ENCODE measurements at regions of chr14 and their contacts with region 1.

Region 1: DNA sequence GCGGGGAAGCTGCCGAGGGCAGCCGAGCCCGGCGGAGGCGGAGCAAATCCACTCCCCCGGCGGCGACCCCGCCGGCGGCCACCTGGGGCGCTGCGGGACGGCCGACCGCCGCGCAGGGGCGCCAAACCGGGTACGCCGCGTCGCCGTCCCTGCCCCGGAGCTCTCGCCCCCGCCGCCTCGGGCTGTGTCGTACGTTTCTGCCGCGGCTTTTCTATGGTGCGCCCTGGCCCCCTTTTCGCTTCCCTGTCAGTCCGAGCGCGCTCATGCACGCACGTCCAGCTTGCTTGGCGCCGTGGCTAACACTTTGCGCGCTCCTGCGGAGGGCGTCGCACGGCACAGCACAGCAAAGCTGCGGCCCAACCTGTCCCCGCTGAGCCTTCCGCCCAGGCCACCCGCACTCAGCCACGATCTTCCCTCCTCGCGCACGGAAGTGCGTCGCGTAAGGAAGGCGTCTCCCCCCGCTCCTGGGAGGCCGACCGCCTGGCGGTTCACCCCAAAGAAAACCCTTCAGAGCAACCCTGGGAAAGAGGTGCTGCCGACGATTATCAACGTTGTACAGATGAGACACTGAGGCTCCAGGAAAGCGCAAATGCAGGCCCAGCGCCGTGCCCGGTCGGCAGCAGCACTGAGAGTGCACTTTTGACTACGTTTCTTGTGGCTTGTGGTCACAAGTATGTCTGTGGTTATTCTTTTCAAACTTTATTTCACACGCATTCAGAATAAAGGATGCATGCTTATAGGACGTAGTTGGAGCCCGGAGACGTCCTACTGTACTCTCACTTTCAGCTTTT is at the start of gene HECTD1:
- DNase-seq: peak; percentile 15 to 93
- H3K4me3 ChIP-seq: peak within 1 kb of the TSS; percentile 82 to 98
- H3K27ac ChIP-seq: peak within 1 kb of the TSS; percentile 98 to 100
- H3K4me1 ChIP-seq: peaks cover 7 to 22% of the 10 kb centered on the region in 2 donors
- H3K27me3 ChIP-seq: no peaks in the 10 kb centered on the region
- CTCF ChIP-seq: peak; percentile 22 to 89 (median 37)
- total RNA-seq, gene HECTD1: 63.6 TPM

Region 2: GRCh38 chr14:31166271-31166710 is 41.7 kb before region 1 on chr14:
- intact Hi-C with region 1: loop called (anchors 2 kb)
- DNase-seq: no peak
- H3K4me3 ChIP-seq: no peak overlapping the region
- H3K27ac ChIP-seq: peak overlapping the region; percentile 80 to 92
- H3K4me1 ChIP-seq: peaks cover 7 to 21% of the 10 kb centered on the region in 2 donors
- H3K27me3 ChIP-seq: no peaks in the 10 kb centered on the region
- CTCF ChIP-seq: no peak

Region 3: DNA sequence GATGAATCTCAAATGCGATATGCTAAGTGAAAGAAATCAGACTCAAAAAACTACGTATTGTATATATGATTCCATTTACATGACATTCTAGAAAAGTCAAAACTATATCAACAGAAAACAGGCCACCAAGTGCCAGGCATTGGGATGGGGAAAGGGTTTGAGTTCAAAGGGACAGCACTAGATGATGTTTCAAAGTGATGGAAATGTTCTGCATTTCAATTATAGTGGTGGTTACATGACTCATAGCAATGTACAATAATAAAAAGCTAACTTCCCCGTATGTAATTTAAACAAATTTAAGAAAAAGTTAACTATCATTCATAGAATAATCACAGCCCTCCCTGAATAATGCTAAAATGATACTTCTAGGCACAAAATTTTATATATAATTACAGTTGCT is 13.9 kb before region 1 on chr14:
- intact Hi-C with region 1: no loop called
- DNase-seq: no peak
- H3K4me3 ChIP-seq: no peak overlapping the region
- H3K27ac ChIP-seq: no peak overlapping the region
- H3K4me1 ChIP-seq: peaks cover 3 to 36% of the 10 kb centered on the region in 2 donors
- H3K27me3 ChIP-seq: no peaks in the 10 kb centered on the region
- CTCF ChIP-seq: no peak

Region 4: GRCh38 chr14:31283578-31284252 is 75.8 kb after region 1 on chr14:
- intact Hi-C with region 1: loop called (anchors 5 kb)
- DNase-seq: no peak
- H3K4me3 ChIP-seq: no peak overlapping the region
- H3K27ac ChIP-seq: peak overlapping the region; percentile 34 to 69
- H3K4me1 ChIP-seq: no peaks in the 10 kb centered on the region
- H3K27me3 ChIP-seq: no peaks in the 10 kb centered on the region
- CTCF ChIP-seq: no peak

Region 5: DNA sequence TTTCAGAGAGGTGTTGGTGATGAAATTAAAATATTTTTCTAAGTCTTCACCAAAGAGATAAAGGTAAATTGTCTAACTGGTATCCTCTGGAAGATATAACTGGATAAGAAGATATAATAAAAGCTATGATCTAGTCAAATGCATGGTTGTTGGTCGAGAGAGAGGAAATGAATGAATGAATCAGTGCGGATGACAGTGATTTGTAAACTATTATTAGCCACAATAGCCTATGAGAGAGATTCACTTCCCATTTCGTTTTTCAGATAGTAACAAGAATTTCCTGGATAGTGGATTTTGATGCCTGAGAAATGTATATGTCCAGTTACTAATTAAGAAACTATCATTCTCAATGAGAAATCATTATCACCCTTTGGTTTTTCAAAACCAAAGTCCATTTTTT is 149.3 kb after region 1 on chr14:
- intact Hi-C with region 1: loop called (anchors 2 kb)
- DNase-seq: no peak
- H3K4me3 ChIP-seq: no peak overlapping the region
- H3K27ac ChIP-seq: no peak overlapping the region
- H3K4me1 ChIP-seq: no peaks in the 10 kb centered on the region
- H3K27me3 ChIP-seq: no peaks in the 10 kb centered on the region
- CTCF ChIP-seq: no peak

Measured in ascending aorta (tissue), 2 donors.